CD4-positive, alpha-beta T cell (primary cell): ENCODE measurements at regions of chr6 and their contacts with region 1.

Region 1: GRCh38 chr6:83859410-83860358 is at the start of gene CYB5R4:
- DNase-seq: peak; percentile 87 to 96 (median 92)
- ATAC-seq: peak; percentile 93
- H3K4me3 ChIP-seq: peak within 1 kb of the TSS; percentile 64
- H3K4me3 Mint-ChIP-seq: peak within 1 kb of the TSS; percentile 91
- H3K27ac ChIP-seq: peak within 1 kb of the TSS; percentile 78 to 81
- H3K27ac Mint-ChIP-seq: peak within 1 kb of the TSS; percentile 78
- H3K4me1 ChIP-seq: peaks cover 10% of the 10 kb centered on the region
- H3K4me1 Mint-ChIP-seq: peaks cover 48% of the 10 kb centered on the region
- H3K27me3 ChIP-seq: peaks cover 11 to 13% of the 10 kb centered on the region in 2 experiments
- H3K27me3 Mint-ChIP-seq: peaks cover 11% of the 10 kb centered on the region
- CTCF ChIP-seq: peak; percentile 49
- total RNA-seq, gene CYB5R4: 15.5 to 16.3 TPM

Region 2: GRCh38 chr6:82247634-82248232 is 1612.0 kb before region 1 on chr6 and contains the start of gene IBTK:
- CTCF ChIA-PET with region 1: no interaction called
- POLR2A ChIA-PET with region 1: interaction called, 5 read pairs
- intact Hi-C with region 1: loop called in 1 of 2 experiments (anchors 10 kb)
- DNase-seq: peak; percentile 84 to 97 (median 90)
- ATAC-seq: peak; percentile 87
- H3K4me3 ChIP-seq: peak within 1 kb of the TSS; percentile 67
- H3K4me3 Mint-ChIP-seq: peak within 1 kb of the TSS; percentile 96
- H3K27ac ChIP-seq: peak within 1 kb of the TSS; percentile 59 to 73
- H3K27ac Mint-ChIP-seq: peak within 1 kb of the TSS; percentile 98
- H3K4me1 ChIP-seq: peaks cover 24% of the 10 kb centered on the region
- H3K4me1 Mint-ChIP-seq: peaks cover 51% of the 10 kb centered on the region
- H3K27me3 ChIP-seq: no peaks in the 10 kb centered on the region
- H3K27me3 Mint-ChIP-seq: no peaks in the 10 kb centered on the region
- CTCF ChIP-seq: no peak
- total RNA-seq, gene IBTK: 11.0 to 11.2 TPM

Region 3: GRCh38 chr6:83067448-83068413 is 792.0 kb before region 1 on chr6 and contains the start of gene DOP1A:
- CTCF ChIA-PET with region 1: interaction called, 5 read pairs
- POLR2A ChIA-PET with region 1: no interaction called
- intact Hi-C with region 1: loop called in 1 of 2 experiments (anchors 10 kb)
- DNase-seq: peak; percentile 93 to 98 (median 96)
- ATAC-seq: peak; percentile 89
- H3K4me3 ChIP-seq: peak within 1 kb of the TSS; percentile 82
- H3K4me3 Mint-ChIP-seq: peak within 1 kb of the TSS; percentile 91
- H3K27ac ChIP-seq: peak within 1 kb of the TSS; percentile 85 to 89
- H3K27ac Mint-ChIP-seq: peak within 1 kb of the TSS; percentile 90
- H3K4me1 ChIP-seq: peaks cover 19% of the 10 kb centered on the region
- H3K4me1 Mint-ChIP-seq: peaks cover 67% of the 10 kb centered on the region
- H3K27me3 ChIP-seq: no peaks in the 10 kb centered on the region
- H3K27me3 Mint-ChIP-seq: no peaks in the 10 kb centered on the region
- CTCF ChIP-seq: peak; percentile 95
- total RNA-seq, gene DOP1A: 15.6 to 15.8 TPM

Region 4: DNA sequence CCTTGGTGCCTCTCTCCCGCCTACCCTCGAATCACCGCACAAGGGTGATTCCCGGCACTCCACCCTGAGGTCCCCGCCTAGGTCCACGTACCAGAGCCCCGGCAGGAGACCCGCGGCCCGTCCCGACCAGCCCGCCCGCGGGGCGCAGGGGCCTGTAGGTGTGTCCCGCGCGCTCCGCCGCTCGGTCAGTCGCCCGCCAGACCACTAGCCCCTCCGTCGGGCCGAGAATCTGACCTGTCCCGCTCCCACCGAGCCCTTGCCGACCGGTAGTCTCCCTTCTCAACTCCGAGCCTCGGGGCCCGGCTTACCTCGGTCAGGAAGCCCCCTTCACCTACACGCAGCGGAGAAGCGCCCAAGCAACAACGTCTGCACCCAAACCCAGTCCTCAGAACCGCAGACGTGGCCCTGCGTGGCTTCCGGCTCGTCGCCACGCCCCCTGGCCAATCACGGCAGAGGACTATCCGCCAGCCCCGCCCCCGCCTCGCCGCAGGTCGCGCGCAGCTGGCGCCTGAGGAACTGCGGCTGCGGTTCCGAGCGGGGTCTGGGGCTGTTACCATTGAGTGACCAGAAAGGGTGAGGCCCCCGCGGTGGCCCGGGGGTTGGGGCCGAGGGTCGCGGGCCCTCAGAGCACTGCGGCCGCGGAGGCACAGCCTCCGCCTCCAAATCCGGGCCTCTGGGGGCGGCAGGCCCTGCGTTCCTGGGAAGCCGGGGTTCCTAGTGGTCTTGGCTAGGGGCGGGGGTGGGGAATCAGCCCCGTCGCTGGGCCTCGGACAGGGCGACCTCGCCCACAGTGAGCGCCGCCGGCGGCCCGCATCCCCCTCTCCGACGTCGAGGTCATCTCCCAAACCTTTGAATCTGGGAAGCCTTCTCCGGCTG is 666.6 kb before region 1 on chr6 and contains the starts of genes PGM3 and RWDD2A:
- CTCF ChIA-PET with region 1: interaction called, 3 read pairs
- POLR2A ChIA-PET with region 1: no interaction called
- intact Hi-C with region 1: loop called in 1 of 2 experiments (anchors 5 kb)
- DNase-seq: peak; percentile 81 to 96 (median 89)
- ATAC-seq: peak; percentile 97
- H3K4me3 ChIP-seq: peak within 1 kb of the TSS; percentile 88
- H3K4me3 Mint-ChIP-seq: peak within 1 kb of the TSS; percentile 97
- H3K27ac ChIP-seq: peak within 1 kb of the TSS in 1 of 2 donors; percentile 70
- H3K27ac Mint-ChIP-seq: peak within 1 kb of the TSS; percentile 94
- H3K4me1 ChIP-seq: peaks cover 17% of the 10 kb centered on the region
- H3K4me1 Mint-ChIP-seq: peaks cover 54% of the 10 kb centered on the region
- H3K27me3 ChIP-seq: no peaks in the 10 kb centered on the region
- H3K27me3 Mint-ChIP-seq: no peaks in the 10 kb centered on the region
- CTCF ChIP-seq: no peak
- total RNA-seq, gene PGM3: 22.6 to 25.3 TPM
- total RNA-seq, gene RWDD2A: 2.8 to 3.0 TPM

Region 5: DNA sequence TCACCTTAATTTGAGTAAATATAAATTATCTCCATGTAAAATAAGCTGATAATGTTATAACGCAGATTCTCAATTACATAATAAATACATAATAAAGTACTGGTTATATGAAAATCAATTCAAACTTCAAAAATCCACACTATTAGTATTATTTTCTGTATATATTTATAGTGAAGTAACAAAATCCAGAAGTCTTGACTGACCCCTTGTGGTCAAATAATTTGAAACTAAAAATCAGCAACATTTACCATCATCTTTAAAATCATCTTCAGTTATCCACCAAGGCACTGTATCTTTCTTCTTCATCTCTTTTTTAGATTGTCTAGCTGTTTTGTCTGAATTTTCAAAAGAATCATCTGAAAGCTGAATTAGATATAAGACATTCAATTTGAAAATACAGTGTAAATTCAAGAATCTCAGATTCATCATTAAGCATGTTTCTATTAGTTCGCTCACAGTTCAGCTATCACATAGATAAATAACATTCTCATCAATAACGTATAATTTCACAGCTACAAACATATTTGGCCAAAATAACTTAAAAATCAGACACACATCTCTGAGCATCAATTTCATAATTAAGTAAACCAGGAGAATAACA is 361.2 kb after region 1 on chr6:
- CTCF ChIA-PET with region 1: interaction called, 4 read pairs
- POLR2A ChIA-PET with region 1: no interaction called
- intact Hi-C with region 1: loop called in 1 of 2 experiments (anchors 2 kb)
- DNase-seq: peak in 3 of 14 experiments; percentile 17 to 33 (median 32)
- ATAC-seq: no peak
- H3K4me3 ChIP-seq: no peak overlapping the region
- H3K4me3 Mint-ChIP-seq: no peak overlapping the region
- H3K27ac ChIP-seq: no peak overlapping the region
- H3K27ac Mint-ChIP-seq: no peak overlapping the region
- H3K4me1 ChIP-seq: no peaks in the 10 kb centered on the region
- H3K4me1 Mint-ChIP-seq: peaks cover 4% of the 10 kb centered on the region
- H3K27me3 ChIP-seq: no peaks in the 10 kb centered on the region
- H3K27me3 Mint-ChIP-seq: no peaks in the 10 kb centered on the region
- CTCF ChIP-seq: peak; percentile 67

Region 6: DNA sequence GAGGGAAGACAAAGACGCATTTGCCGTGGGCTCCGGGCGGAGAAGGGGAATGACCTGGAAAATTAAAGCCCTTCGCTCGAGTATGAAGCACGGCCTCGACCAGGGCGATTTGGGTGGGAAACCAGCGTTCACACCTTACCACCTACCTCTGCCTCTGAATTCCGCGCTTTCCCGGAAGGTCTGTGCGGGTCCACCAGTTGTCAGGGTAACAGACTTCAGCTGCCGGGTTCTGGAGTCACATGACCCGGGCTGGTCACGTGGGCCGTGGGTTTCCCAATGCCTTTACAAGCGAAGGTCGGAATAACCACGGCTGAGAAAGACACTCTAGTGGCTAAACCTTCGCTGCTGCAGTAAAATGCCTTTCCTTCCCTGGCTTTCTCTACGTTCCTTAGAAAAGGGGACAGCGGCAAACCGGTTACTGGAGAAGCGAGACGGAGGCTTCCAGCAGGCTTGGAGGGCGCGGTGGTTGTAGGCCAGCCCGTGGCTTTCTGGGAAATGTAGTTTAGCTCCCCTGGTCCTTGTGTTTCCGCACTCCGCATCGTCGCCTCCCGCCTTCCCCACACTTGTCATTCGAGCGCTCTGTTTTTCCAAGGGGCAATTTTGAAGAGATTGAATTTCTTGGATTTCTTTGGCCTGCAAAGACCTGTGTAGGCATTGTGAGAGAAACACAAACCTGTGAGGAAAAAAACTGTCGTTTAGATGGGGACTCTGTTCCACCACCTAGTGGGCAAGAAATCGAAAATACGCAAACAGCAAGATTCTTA is 367.9 kb after region 1 on chr6 and contains the start of gene CEP162:
- CTCF ChIA-PET with region 1: interaction called, 4 read pairs
- POLR2A ChIA-PET with region 1: interaction called, 16 read pairs
- intact Hi-C with region 1: loop called (anchors 1 to 2 kb)
- DNase-seq: peak; percentile 76 to 93 (median 85)
- ATAC-seq: peak; percentile 90
- H3K4me3 ChIP-seq: peak within 1 kb of the TSS; percentile 80
- H3K4me3 Mint-ChIP-seq: peak within 1 kb of the TSS; percentile 99
- H3K27ac ChIP-seq: peak within 1 kb of the TSS; percentile 58 to 59
- H3K27ac Mint-ChIP-seq: peak within 1 kb of the TSS; percentile 86
- H3K4me1 ChIP-seq: peaks cover 8% of the 10 kb centered on the region
- H3K4me1 Mint-ChIP-seq: peaks cover 27% of the 10 kb centered on the region
- H3K27me3 ChIP-seq: peaks cover 0 to 4% of the 10 kb centered on the region in 2 experiments
- H3K27me3 Mint-ChIP-seq: peaks cover 14% of the 10 kb centered on the region
- CTCF ChIP-seq: peak; percentile 83
- total RNA-seq, gene CEP162: 2.6 to 2.8 TPM

Region 7: GRCh38 chr6:85642774-85643536 is 1783.3 kb after region 1 on chr6 and contains the start of gene SYNCRIP:
- CTCF ChIA-PET with region 1: no interaction called
- POLR2A ChIA-PET with region 1: interaction called, 8 read pairs
- intact Hi-C with region 1: loop called in 1 of 2 experiments (anchors 10 kb)
- DNase-seq: peak; percentile 94 to 99 (median 98)
- ATAC-seq: peak; percentile 78
- H3K4me3 ChIP-seq: peak within 1 kb of the TSS; percentile 88
- H3K4me3 Mint-ChIP-seq: peak within 1 kb of the TSS; percentile 100
- H3K27ac ChIP-seq: peak within 1 kb of the TSS; percentile 96 to 99
- H3K27ac Mint-ChIP-seq: peak within 1 kb of the TSS; percentile 100
- H3K4me1 ChIP-seq: peaks cover 15% of the 10 kb centered on the region
- H3K4me1 Mint-ChIP-seq: peaks cover 55% of the 10 kb centered on the region
- H3K27me3 ChIP-seq: no peaks in the 10 kb centered on the region
- H3K27me3 Mint-ChIP-seq: no peaks in the 10 kb centered on the region
- CTCF ChIP-seq: no peak
- total RNA-seq, gene SYNCRIP: 53.2 to 58.3 TPM